CD8-positive, alpha-beta memory T cell (primary cell): ENCODE measurements at regions of chr9 and their contacts with region 1.

Region 1: DNA sequence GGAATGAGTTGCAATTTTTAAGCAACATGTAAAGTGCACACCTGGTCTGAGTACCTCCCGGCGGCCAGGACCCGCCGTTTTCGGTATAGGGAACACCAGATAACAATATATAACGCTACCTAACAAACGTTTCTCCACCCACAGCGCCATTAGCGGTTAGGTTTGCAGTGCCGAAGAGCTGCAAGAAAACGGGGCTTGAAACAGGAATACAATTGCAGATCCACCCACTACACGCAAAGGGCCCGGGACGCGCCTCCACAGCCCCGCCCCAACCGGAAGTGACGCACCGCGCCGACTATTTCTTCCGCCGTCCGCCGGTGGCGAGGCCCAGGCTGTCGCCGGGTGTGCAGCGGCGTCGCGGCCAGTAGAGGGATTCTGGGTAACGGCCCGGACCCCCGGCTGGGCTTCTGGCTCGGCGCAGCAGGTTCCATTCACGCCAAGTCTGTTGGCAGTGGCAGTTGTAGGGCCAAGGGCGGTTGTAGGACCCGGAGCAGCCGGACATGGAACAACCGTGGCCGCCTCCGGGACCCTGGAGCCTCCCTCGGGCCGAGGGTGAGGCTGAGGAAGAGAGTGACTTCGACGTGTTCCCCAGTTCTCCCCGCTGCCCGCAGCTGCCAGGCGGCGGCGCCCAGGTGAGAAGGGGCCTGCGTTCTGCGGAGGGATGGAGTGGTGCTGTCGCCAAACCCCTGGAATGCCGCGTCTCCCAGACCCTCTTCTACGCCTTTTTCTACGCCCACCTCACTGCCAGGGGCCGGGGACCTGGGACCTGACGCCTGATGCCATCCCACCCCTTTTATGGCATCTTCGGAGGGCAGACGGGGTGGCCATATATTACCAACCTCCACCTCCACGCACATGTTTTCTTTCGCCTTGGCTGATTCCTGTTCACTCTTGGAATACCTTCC is at the start of gene CDC37L1:
- DNase-seq: peak; percentile 98 to 99 (median 99)
- H3K4me3 ChIP-seq: peak within 1 kb of the TSS; percentile 83
- H3K4me3 Mint-ChIP-seq: no peak within 1 kb of the TSS
- H3K27ac ChIP-seq: peak within 1 kb of the TSS; percentile 90
- H3K27ac Mint-ChIP-seq: no peak within 1 kb of the TSS
- H3K4me1 ChIP-seq: peaks cover 33% of the 10 kb centered on the region
- H3K4me1 Mint-ChIP-seq: peaks cover 11 to 12% (median 12%) of the 10 kb centered on the region in 3 donors
- H3K27me3 ChIP-seq: no peaks in the 10 kb centered on the region
- H3K27me3 Mint-ChIP-seq: peaks cover 0 to 8% of the 10 kb centered on the region in 2 donors
- total RNA-seq, gene CDC37L1: 12.5 to 15.0 TPM

Region 2: GRCh38 chr9:4666042-4666699 is 13.3 kb before region 1 on chr9 and contains the start of gene SPATA6L:
- CTCF ChIA-PET with region 1: interaction called, 8 read pairs
- POLR2A ChIA-PET with region 1: interaction called, 15 read pairs
- DNase-seq: peak; percentile 20 to 67 (median 33)
- H3K4me3 ChIP-seq: peak within 1 kb of the TSS; percentile 58
- H3K4me3 Mint-ChIP-seq: peak within 1 kb of the TSS; percentile 81 to 91 (median 88)
- H3K27ac ChIP-seq: no peak within 1 kb of the TSS
- H3K27ac Mint-ChIP-seq: peak within 1 kb of the TSS; percentile 60 to 93 (median 80)
- H3K4me1 ChIP-seq: peaks cover 57% of the 10 kb centered on the region
- H3K4me1 Mint-ChIP-seq: peaks cover 58 to 72% (median 70%) of the 10 kb centered on the region in 3 donors
- H3K27me3 ChIP-seq: no peaks in the 10 kb centered on the region
- H3K27me3 Mint-ChIP-seq: peaks cover 0 to 9% of the 10 kb centered on the region in 2 donors
- total RNA-seq, gene SPATA6L: 0.51 to 0.96 TPM

Region 3: DNA sequence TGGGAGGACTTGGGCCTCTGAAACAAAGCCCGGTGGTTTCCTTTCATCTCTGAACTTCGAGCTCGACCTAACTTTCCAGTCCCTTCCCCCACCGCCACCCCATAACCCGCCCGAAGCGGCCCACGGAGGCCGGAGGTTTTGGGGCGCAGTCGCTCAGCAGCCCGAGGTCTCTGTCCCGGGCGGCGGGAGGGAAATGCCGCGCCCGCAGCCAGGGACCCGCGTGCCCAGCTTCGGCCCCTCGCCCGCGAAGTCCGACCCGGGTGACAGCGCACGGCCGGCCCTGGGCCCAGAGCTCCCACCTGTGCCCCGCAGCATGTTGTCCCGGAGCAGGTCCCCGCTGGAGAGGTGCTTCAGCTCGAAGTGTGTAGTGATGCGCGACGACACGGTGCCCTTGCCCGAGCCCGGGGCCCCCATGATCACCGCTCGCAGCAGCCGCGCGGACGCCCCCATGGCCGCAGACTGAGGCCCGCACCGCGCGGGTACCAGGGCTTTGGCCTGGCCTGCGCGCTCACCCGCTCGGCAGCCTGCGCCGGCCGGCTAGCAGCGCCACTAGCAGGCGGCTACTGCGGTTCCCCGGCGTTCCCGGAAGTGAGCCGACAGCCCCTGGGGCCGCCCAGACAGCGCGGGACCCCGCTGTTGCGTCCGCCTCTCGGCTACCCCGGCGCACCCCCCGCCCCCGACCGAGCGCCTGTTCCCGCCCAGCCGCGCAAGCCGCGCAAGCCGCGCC is 61.3 kb after region 1 on chr9 and contains the start of gene AK3:
- CTCF ChIA-PET with region 1: interaction called, 5 read pairs
- POLR2A ChIA-PET with region 1: interaction called, 20 read pairs
- DNase-seq: peak; percentile 85 to 92 (median 87)
- H3K4me3 ChIP-seq: peak within 1 kb of the TSS; percentile 86
- H3K4me3 Mint-ChIP-seq: peak within 1 kb of the TSS; percentile 85 to 100 (median 94)
- H3K27ac ChIP-seq: peak within 1 kb of the TSS; percentile 79
- H3K27ac Mint-ChIP-seq: peak within 1 kb of the TSS; percentile 86 to 99 (median 92)
- H3K4me1 ChIP-seq: peaks cover 25% of the 10 kb centered on the region
- H3K4me1 Mint-ChIP-seq: peaks cover 30 to 50% (median 43%) of the 10 kb centered on the region in 3 donors
- H3K27me3 ChIP-seq: no peaks in the 10 kb centered on the region
- H3K27me3 Mint-ChIP-seq: no peaks in the 10 kb centered on the region
- total RNA-seq, gene AK3: 25.3 to 29.8 TPM